ENCODE measurements at regions of chr12 and their contacts with region 1.

Region 1: DNA sequence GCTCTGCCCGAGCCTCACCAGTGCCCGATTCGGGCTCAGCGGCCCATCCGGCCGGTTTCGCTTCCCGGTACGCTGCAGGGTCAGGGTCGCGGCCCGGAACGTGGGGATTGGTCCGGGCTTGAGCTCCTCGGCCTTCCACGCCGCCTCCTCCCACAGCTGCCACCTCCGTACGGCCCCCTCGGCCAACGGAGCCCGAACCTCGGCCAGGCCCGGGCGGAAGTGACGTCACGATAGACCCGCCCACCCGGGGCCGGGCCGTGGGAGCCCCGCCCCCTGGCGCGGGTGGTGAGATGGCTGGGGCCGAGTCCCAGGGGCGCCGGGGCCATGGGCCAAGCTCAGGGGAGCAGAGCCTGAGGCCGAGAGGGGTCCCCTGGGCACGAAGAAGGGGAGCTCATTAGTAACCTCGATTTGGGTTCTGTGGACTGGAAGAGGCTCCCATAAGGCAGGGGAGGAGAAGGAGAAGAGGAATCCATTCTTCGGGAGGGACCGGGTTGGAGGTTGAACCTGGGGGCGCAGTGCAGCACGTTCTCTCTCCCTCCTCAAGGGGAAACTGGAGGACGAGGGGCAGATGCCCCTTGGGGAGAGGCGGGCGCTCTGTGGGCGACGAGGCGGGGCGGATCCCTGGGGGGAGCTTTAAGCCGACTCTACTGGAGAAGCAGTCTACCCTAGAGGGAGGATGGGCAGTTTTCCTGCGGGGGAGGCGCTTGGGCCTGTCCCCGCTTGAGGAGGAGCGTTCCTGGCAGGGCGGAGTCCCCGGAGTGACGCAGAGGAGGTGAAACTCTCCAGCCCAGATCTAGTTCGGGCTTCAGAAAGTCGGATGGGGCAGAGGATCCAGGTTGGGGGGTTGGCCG is at the start of gene MLF2:
- DNase-seq: peak; percentile 99
- ATAC-seq: peak; percentile 96
- H3K4me3 Mint-ChIP-seq: peak within 1 kb of the TSS; percentile 91
- H3K27ac Mint-ChIP-seq: peak within 1 kb of the TSS; percentile 99
- H3K4me1 Mint-ChIP-seq: peaks cover 29% of the 10 kb centered on the region
- H3K27me3 Mint-ChIP-seq: peaks cover 4% of the 10 kb centered on the region
- total RNA-seq, gene MLF2: 109 to 113 TPM

Region 2: DNA sequence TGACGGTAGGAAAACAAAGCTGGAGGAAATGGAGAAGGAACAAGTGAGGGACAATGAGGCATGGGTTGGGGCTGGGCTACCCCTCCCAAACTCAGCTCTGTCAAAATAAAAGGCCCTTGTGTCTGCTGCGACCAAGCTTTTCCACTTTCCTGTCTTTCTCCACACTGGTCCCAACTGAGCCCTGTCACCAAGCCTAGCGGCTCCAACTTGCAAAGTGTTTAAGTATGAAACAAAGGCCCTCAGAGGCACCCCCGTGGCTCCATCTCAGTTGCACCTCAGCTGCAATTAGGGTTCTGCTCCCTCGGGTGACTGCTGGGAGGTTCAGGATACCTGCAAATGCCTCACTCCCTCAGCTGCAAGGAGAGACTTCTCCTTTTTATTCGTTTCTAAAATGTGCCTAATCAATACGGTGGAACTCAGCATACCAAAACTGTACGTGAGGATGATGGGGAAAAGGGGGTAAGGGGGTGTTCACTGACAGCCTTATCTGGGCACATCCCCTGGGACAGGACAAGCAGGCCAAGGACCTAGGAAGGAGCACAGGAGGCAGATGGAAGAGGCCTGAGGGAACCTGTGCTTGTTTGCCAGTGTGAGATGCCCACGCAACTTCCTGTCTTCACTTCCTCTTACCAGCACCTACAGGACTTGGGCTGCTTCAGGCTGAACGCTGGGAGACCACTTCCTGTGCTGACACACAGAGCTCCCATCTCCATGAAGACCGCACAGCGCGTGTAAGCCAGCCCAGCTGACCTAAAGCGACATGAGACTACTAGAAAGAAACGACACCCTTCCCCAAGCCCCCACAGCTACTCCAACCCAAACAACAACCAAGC is 291.5 kb before region 1 on chr12:
- CTCF ChIA-PET with region 1: no interaction called
- POLR2A ChIA-PET with region 1: no interaction called
- DNase-seq: peak; percentile 95
- ATAC-seq: peak; percentile 79
- H3K4me3 Mint-ChIP-seq: peak overlapping the region; percentile 71
- H3K27ac Mint-ChIP-seq: peak overlapping the region; percentile 99
- H3K4me1 Mint-ChIP-seq: peaks cover 92% of the 10 kb centered on the region
- H3K27me3 Mint-ChIP-seq: no peaks in the 10 kb centered on the region

Region 3: DNA sequence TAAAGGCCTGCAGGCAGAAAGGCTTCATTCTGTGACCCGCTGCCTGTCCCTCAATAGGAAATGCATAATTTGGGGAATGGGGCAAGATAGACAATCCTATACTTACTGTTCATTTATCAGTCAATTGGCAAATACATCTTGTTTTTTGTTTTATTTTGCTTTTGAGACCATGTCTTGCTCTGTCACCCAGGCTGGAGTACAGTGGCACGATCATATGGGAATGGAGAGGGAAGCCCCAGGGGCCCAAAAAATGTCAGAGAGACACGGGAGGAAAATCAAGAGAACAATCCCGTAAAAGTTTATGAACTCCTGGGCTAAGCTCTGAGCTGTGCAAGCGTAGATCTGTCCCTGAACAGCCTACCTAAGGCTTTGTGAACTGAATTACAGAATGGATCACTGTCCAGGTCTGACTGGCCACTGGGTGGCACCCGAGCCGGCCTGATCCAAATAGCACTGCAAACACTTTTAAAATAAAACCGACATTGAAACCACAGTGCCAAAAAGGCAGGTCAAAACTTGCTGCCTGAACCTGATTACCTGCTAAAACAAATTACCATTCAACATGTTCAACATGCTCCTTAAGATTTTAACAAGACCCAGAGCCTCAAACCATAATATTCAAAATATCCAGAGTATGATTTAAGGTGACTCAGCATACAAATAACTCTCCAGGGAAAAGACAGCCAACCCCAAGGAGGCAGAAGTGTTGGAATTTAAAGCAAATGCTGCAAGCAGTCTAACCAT is 17.5 kb before region 1 on chr12:
- CTCF ChIA-PET with region 1: interaction called, 30 read pairs
- POLR2A ChIA-PET with region 1: interaction called, 4 read pairs
- DNase-seq: peak; percentile 68
- ATAC-seq: peak; percentile 76
- H3K4me3 Mint-ChIP-seq: no peak overlapping the region
- H3K27ac Mint-ChIP-seq: peak overlapping the region; percentile 44
- H3K4me1 Mint-ChIP-seq: peaks cover 10% of the 10 kb centered on the region
- H3K27me3 Mint-ChIP-seq: no peaks in the 10 kb centered on the region

Region 4: DNA sequence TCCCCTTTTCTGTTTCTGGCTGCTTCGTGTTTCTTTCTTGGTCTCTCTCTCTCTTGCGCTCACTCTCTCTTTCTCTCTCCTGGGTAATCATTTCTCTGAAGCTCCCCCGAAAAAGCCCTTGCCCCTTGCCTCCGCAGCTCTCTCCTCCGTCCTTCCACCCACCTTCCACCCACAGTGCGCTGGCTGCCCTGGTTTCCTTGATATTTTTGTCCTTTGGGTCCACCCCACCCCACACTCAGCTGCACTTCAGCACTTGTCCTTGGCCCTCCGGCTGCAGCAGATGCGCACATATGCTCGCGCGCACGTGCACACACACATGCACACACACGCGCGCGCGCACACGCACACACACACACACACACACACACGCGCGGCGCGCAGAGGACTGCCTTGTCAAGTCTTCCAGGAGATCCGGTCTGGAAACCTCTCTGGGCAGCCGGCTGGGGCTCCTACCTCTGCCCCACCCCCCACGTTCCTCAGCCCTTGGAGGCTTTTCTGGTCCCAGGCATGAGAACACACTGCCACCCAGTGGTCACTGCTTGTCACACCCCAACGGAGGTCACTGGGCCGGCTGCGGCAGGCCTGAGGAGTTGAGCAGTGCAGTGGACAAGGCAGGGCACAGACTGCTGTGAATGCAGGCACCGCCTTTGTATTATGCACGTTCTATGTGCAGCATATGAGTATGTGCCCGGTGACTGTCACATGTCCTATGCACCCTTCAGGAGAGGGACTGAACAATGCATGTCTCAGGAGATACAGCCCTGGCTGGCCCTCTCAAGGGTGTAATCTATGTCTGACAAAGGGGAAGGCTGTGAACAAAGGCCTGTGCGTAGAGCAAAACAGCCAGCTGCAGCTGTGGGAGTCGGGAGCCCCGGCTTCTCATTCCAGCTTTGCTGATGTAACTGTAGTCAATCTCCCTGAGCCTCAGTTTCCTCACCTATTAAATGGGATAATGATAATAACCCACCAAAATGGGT is 25.7 kb after region 1 on chr12:
- CTCF ChIA-PET with region 1: interaction called, 378 read pairs
- POLR2A ChIA-PET with region 1: interaction called, 66 read pairs
- DNase-seq: peak; percentile 94
- ATAC-seq: peak; percentile 79
- H3K4me3 Mint-ChIP-seq: peak overlapping the region; percentile 66
- H3K27ac Mint-ChIP-seq: peak overlapping the region; percentile 79
- H3K4me1 Mint-ChIP-seq: peaks cover 59% of the 10 kb centered on the region
- H3K27me3 Mint-ChIP-seq: no peaks in the 10 kb centered on the region

Region 5: GRCh38 chr12:6825398-6826124 is 72.4 kb after region 1 on chr12:
- CTCF ChIA-PET with region 1: interaction called, 116 read pairs
- POLR2A ChIA-PET with region 1: interaction called, 10 read pairs
- DNase-seq: peak; percentile 87
- ATAC-seq: peak; percentile 69
- H3K4me3 Mint-ChIP-seq: no peak overlapping the region
- H3K27ac Mint-ChIP-seq: no peak overlapping the region
- H3K4me1 Mint-ChIP-seq: peaks cover 38% of the 10 kb centered on the region
- H3K27me3 Mint-ChIP-seq: peaks cover 74% of the 10 kb centered on the region

Region 6: GRCh38 chr12:6839482-6840201 is 86.5 kb after region 1 on chr12:
- CTCF ChIA-PET with region 1: interaction called, 35 read pairs
- POLR2A ChIA-PET with region 1: interaction called, 4 read pairs
- DNase-seq: no peak
- ATAC-seq: no peak
- H3K4me3 Mint-ChIP-seq: no peak overlapping the region
- H3K27ac Mint-ChIP-seq: no peak overlapping the region
- H3K4me1 Mint-ChIP-seq: peaks cover 3% of the 10 kb centered on the region
- H3K27me3 Mint-ChIP-seq: peaks cover 3% of the 10 kb centered on the region

Region 7: DNA sequence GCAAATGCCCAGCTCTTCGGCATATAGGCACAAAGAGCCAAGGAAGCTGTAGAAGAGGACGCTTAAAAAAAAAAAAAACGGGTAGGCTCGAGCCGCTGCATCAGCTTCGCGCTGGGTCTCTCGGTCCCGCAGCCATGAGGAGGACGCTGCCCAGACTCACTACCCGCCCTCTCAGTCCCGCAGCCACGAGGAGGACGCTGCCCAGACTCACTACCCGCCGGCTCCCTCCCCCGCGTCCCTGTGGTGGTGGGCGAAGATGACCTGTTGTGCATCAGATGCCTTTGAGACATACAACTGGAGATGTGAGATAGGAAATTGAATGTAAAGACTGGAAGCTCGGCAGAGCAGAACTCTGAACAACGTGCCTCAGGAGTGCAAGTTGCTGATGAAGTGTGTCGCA is 131.4 kb after region 1 on chr12:
- CTCF ChIA-PET with region 1: no interaction called
- POLR2A ChIA-PET with region 1: no interaction called
- DNase-seq: no peak
- ATAC-seq: no peak
- H3K4me3 Mint-ChIP-seq: no peak overlapping the region
- H3K27ac Mint-ChIP-seq: no peak overlapping the region
- H3K4me1 Mint-ChIP-seq: peaks cover 3% of the 10 kb centered on the region
- H3K27me3 Mint-ChIP-seq: no peaks in the 10 kb centered on the region

Region 8: GRCh38 chr12:6904280-6905278 is 151.4 kb after region 1 on chr12 and contains the start of gene LRRC23:
- CTCF ChIA-PET with region 1: no interaction called
- POLR2A ChIA-PET with region 1: no interaction called
- DNase-seq: peak; percentile 99
- ATAC-seq: peak; percentile 95
- H3K4me3 Mint-ChIP-seq: no peak within 1 kb of the TSS
- H3K27ac Mint-ChIP-seq: no peak within 1 kb of the TSS
- H3K4me1 Mint-ChIP-seq: peaks cover 11% of the 10 kb centered on the region
- H3K27me3 Mint-ChIP-seq: no peaks in the 10 kb centered on the region
- total RNA-seq, gene LRRC23: 6.5 to 8.6 TPM

Region 9: DNA sequence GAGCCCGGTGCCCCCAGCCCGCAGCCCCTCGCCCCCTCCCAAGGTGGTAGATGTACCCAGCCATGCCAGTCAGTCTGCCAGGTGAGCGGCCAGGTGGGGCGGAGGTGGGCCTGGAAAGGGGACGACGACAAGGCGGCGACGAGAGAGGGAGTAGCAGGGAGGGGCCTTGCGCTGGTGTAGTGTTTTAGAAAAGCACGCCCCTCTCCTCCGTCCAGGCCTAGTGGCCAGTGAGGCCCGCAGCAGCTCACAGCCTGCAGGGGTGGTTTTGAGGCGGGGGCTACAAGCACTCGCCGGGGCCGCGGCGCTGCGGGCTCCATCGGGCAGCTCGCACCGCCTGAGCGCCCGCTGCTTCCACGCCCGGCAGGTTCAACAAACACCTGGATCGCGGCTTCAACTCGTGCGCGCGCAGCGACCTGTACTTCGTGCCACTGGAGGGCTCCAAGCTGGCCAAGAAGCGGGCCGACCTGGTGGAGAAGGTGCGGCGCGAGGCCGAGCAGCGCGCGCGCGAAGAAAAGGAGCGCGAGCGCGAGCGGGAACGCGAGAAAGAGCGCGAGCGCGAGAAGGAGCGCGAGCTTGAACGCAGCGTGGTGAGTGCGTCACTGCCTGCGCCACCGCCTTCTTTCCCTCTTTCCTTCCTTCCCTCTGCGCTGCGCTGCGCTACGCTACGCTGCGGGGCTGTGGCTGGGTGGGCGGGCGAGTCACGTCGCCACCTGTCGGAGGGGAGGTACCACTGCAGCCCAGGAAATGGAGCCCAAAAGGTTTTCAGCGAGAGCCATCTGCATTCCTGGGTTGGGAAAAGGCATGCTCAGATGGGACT is 184.5 kb after region 1 on chr12:
- CTCF ChIA-PET with region 1: no interaction called
- POLR2A ChIA-PET with region 1: no interaction called
- DNase-seq: peak; percentile 96
- ATAC-seq: peak; percentile 93
- H3K4me3 Mint-ChIP-seq: peak overlapping the region; percentile 82
- H3K27ac Mint-ChIP-seq: peak overlapping the region; percentile 97
- H3K4me1 Mint-ChIP-seq: peaks cover 62% of the 10 kb centered on the region
- H3K27me3 Mint-ChIP-seq: no peaks in the 10 kb centered on the region

Measured in activated CD8-positive, alpha-beta T cell treated with anti-CD3 and anti-CD28 coated beads, Interleukin-2, amount 10 ng/mL, durations not matched to agents 7 days and 5 days (primary cell).